Gastrocnemius medialis (tissue), 4 donors: ENCODE measurements at regions of chr7 and their contacts with region 1.

Region 1: GRCh38 chr7:156892821-156893706 is at the start of gene LMBR1:
- DNase-seq: peak; percentile 92 to 96
- ATAC-seq: peak; percentile 89 to 90
- H3K4me3 ChIP-seq: peak within 1 kb of the TSS; percentile 82 to 97 (median 87)
- H3K27ac ChIP-seq: peak within 1 kb of the TSS; percentile 90 to 99 (median 96)
- H3K4me1 ChIP-seq: peaks cover 27 to 47% of the 10 kb centered on the region in 2 donors
- H3K27me3 ChIP-seq: no peaks in the 10 kb centered on the region
- CTCF ChIP-seq: peak; percentile 79 to 94 (median 89)
- POLR2A ChIP-seq: peak; percentile 75 to 83
- total RNA-seq, gene LMBR1: 27.9 to 87.0 (median 35.3) TPM

Region 2: DNA sequence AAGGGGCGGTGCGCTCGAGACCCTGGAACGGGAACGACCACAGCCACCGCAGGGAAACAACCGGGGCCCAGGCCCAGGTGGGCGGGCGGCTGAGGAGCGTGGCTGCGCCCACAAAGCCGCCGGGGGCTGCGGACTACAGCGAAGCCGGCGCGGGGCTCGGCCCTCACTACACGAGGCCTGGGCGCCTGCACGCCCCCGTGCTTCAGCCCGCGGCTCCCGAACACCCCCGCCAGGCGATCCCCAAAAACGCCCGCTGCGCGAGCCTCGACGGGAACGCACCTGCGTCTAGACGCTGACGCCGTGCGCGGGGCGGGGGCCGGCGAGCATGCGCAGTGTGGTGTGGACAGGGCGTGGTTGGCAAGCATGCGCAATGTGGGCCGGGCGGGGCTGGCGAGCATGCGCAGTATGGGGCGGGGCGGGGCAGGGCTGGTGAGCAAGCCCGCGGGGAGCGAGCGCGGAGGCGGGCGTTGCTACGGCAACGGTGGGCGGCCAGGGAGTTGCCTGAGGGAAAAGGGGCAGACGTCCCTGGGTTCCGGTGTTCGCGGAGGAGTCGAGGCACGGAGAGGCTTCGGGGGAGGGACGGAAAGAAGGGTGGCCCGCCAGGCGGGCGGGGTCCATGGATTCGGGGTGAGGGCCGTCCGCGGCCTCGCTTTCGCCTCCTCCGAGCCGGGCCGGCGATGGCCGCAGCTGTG is 252.7 kb before region 1 on chr7 and contains the start of gene RNF32:
- in situ Hi-C with region 1: no loop called
- intact Hi-C with region 1: loop called (anchors 10 kb)
- DNase-seq: peak; percentile 75 to 76
- ATAC-seq: peak; percentile 89
- H3K4me3 ChIP-seq: peak within 1 kb of the TSS; percentile 67 to 93 (median 79)
- H3K27ac ChIP-seq: peak within 1 kb of the TSS; percentile 56 to 91 (median 72)
- H3K4me1 ChIP-seq: peaks cover 0 to 11% of the 10 kb centered on the region in 2 donors
- H3K27me3 ChIP-seq: peaks cover 5 to 9% (median 5%) of the 10 kb centered on the region in 3 donors
- CTCF ChIP-seq: no peak
- POLR2A ChIP-seq: peak; percentile 33 to 58
- total RNA-seq, gene RNF32: 0.85 TPM in 1 of 4 donors, not detected in the others

Region 3: DNA sequence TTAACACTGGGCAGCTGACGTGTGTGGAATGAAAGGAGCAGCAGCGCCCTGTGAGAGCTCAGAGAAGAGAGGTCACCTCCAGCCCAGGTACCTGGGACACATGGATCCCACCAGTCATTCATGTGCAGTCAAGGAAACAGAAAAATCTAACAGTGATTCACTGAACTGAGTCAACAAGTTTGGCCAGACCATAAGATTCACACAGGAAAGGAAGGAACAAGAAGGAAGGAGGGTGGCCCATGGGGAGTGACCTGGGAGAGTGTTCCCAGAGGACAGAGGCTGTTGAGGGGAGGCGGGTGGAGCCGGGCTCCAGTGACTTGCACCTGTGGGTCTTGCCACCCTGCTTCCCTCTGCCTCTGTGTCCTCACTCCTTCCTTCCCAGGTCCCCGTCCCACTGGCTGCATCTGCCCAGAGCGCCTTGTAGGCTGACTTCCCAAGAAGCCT is 224.9 kb before region 1 on chr7:
- in situ Hi-C with region 1: no loop called
- intact Hi-C with region 1: no loop called
- DNase-seq: no peak
- ATAC-seq: no peak
- H3K4me3 ChIP-seq: no peak overlapping the region
- H3K27ac ChIP-seq: no peak overlapping the region
- H3K4me1 ChIP-seq: no peaks in the 10 kb centered on the region
- H3K27me3 ChIP-seq: no peaks in the 10 kb centered on the region
- CTCF ChIP-seq: no peak
- POLR2A ChIP-seq: no peak

Region 4: GRCh38 chr7:156725077-156725476 is 168.0 kb before region 1 on chr7:
- in situ Hi-C with region 1: no loop called
- intact Hi-C with region 1: no loop called
- DNase-seq: no peak
- ATAC-seq: no peak
- H3K4me3 ChIP-seq: no peak overlapping the region
- H3K27ac ChIP-seq: no peak overlapping the region
- H3K4me1 ChIP-seq: no peaks in the 10 kb centered on the region
- H3K27me3 ChIP-seq: no peaks in the 10 kb centered on the region
- CTCF ChIP-seq: no peak
- POLR2A ChIP-seq: no peak

Region 5: DNA sequence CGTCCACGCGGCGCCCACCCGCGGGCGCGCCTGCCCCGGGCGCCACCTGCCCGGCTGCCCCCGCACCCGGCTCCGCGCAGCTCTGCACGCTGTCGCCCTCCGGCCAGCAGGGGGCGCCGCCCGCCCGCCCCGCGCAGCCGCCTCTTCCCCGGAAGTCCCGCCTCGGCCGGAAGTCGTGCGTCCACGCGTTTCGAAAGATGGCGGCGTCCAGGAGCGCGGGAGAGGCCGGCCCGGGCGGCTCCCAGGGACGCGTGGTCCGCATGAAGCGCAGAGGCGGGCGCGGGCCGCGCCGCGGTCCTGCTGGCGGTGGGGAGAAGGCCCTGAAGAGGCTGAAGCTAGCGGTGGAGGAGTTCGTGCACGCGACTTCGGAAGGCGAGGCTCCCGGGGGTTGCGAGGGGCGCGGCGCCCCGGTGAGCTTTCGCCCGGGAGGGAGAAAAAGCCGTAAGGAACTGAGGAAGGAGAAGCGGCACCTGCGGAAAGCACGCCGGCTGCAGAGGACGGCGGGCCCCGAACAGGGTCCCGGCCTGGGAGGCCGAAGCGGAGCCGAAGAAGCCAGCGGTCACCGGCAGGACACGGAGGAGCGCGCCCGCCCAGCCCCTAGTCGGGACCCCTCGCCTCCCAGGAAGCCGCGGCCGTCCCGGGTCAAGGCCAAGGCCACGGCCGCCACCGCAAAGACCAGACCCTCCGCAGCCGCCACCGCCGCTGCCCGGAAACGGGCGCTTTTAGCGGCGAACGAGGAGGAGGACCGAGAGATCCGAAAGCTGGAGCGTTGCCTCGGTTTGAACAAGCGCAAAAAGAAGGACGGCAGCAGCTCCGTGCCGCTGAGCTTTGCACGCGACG is 56.7 kb after region 1 on chr7 and contains the start of gene NOM1:
- in situ Hi-C with region 1: no loop called
- intact Hi-C with region 1: loop called (anchors 1 kb)
- DNase-seq: peak; percentile 69 to 74
- ATAC-seq: peak; percentile 93 to 97
- H3K4me3 ChIP-seq: peak within 1 kb of the TSS; percentile 84 to 95 (median 92)
- H3K27ac ChIP-seq: peak within 1 kb of the TSS; percentile 55 to 84 (median 72)
- H3K4me1 ChIP-seq: peaks cover 25% of the 10 kb centered on the region in 2 donors
- H3K27me3 ChIP-seq: peaks cover 0 to 4% (median 4%) of the 10 kb centered on the region in 3 donors
- CTCF ChIP-seq: peak in 4 of 5 experiments; percentile 95 to 97 (median 95)
- POLR2A ChIP-seq: peak in 1 of 2 donors; percentile 49
- total RNA-seq, gene NOM1: 12.9 to 18.0 (median 14.3) TPM